ENCODE measurements at regions of chr1 and their contacts with region 1.

Region 1: DNA sequence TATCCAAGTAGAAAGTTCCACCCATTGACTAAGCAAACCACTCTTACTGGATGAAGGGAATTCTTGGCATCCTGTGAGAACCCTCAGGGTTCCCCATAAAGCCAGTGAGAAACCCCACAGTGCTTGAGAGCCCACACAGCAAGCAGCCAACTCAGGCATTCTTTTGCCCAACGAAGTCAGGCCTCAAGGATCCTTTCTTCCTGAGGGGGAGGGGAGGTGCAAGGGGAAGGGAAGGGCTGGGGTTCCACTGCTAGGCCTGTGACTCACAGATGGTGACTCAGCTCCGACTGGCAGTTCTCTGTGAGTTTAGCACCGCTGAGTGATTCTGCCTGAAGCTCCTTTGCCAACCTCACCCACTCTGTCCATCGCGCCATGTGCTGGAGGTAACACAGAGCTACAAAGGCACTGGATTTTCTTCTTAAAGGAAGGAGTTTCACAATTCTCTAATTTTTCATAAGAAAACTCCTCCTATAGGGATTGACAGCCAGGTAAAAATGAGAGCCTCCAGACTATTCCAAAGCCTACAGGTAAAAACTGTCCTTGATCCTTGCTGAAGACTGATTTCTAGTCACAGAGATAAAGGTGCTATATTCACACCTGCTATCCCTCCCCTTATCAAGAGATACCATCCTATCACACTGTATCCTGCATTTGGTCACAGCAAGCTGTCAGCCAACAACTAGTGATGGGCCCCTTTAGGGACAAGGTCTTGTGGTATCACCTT is 4.8 kb downstream of the ENO1 start:
- DNase-seq: peak; percentile 82 to 93
- ATAC-seq: peak; percentile 73 to 80
- H3K4me3 ChIP-seq: peak overlapping the region; percentile 78
- H3K27ac ChIP-seq: peak overlapping the region; percentile 99
- H3K4me1 ChIP-seq: peaks cover 63% of the 10 kb centered on the region
- CTCF ChIP-seq: no peak
- EP300 ChIP-seq: peak in 1 of 2 experiments; percentile 27; a peak in 1 of 5 replicates
- POLR2A ChIP-seq: no peak
- RAD21 ChIP-seq: no peak; a peak in 1 of 5 replicates

Region 2: GRCh38 chr1:8858888-8859706 is 14.6 kb before region 1 on chr1:
- CTCF ChIA-PET with region 1: interaction called, 23 read pairs
- POLR2A ChIA-PET with region 1: interaction called, 12 read pairs
- DNase-seq: peak in 1 of 2 experiments; percentile 72
- ATAC-seq: peak; percentile 4 to 20; a peak in 5 of 6 replicates
- H3K4me3 ChIP-seq: no peak overlapping the region
- H3K27ac ChIP-seq: peak overlapping the region in 1 of 2 experiments; percentile 56; a peak in 2 of 6 replicates
- H3K4me1 ChIP-seq: peaks cover 40% of the 10 kb centered on the region; the same call in 2 of the 3 replicates
- CTCF ChIP-seq: peak; percentile 52
- EP300 ChIP-seq: no peak
- POLR2A ChIP-seq: no peak
- RAD21 ChIP-seq: peak; percentile 37 to 43; a peak in 4 of 5 replicates

Region 3: DNA sequence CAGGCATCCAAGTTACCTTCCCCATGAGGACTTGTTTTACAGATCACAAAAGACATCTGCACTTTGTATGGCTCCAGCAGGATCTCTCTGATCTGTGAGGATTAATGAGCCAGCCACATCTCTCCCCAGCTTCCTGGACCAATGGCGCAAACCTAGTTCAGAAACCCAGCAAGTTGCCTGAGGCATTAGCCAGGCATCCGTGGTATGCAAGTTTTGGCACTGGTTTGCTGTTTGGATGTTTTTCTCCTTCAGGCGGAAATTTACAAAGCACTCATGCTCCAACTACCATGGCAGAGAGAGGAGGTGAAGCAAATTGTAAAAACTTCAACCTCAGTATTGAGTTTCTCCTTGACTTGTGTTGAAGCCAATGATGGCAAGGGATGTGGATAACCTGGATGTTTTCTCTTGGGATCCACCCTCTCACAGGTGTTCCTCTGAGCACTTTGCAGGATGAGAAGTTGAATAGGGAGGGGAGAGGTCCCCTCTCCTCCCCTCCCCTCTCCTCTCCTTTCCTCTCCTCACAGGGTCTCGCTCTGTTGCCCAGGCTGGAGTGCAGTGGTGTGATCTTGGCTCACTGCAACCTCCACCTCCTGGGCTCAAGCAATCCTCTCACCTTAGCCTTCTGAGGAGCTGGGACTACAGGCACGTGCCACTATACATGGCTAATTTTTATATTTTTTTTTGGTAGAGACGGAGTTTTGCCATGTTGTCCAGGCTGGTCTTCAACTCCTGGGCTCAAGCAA is 30.4 kb after region 1 on chr1:
- CTCF ChIA-PET with region 1: interaction called, 8 read pairs
- POLR2A ChIA-PET with region 1: interaction called, 10 read pairs
- DNase-seq: peak; percentile 70 to 90
- ATAC-seq: peak; percentile 83 to 87
- H3K4me3 ChIP-seq: no peak overlapping the region
- H3K27ac ChIP-seq: peak overlapping the region; percentile 86 to 96
- H3K4me1 ChIP-seq: peaks cover 76% of the 10 kb centered on the region
- CTCF ChIP-seq: no peak
- EP300 ChIP-seq: peak in 1 of 2 experiments; percentile 69; a peak in 1 of 5 replicates
- POLR2A ChIP-seq: no peak
- RAD21 ChIP-seq: no peak